MCF 10A (cell line): ENCODE measurements at regions of chr6 and their contacts with region 1.

Region 1: DNA sequence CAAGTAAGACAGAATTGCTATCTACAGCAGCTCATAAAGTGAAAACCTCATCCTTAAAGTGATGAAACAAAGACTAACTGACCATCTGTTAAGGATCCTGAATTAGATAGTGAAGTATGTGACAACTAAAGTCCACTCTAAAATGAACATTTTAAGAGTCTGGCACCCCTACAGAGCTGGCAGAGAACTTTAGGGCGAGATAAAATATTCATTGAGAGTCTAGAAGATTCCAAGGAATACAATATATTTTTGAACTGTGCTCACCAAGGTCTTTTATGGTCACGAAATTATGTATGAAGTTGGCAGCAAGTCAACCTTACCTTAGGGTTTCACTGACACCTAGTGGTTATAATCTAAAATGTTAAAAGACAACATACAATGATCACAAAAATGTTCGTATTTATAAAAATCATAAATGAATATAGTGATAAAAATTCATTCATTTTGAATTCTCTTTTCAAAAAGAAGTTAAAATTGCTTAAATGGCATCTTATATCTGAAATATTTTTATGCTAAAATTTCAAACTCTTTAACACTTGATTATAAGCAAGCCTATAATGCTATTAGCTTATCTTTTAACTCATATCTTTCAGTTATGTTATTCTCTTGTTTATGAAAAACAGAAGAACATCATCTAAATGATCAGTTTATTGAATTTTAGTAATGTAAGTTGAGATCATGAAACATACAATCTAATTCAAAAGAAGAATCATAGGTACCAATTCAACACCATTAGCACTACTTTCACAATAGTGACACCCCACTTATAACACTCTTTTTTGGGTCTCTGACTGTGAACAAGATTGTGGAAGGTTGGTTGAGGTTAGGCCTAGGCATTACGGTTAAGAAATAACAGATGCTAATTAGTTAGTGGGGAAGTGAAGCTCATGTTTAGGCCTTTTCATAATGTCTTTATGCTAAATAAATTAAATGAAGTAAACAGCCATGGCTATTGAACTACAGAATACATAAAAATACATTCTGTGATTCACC is 27.5 kb downstream of the RSPH3 start:
- DNase-seq: peak; percentile 63
- H3K4me3 Mint-ChIP-seq: no peak overlapping the region
- H3K27ac Mint-ChIP-seq: no peak overlapping the region
- H3K4me1 Mint-ChIP-seq: peaks cover 5% of the 10 kb centered on the region
- H3K27me3 Mint-ChIP-seq: no peaks in the 10 kb centered on the region
- CTCF ChIP-seq: peak; percentile 57

Region 2: DNA sequence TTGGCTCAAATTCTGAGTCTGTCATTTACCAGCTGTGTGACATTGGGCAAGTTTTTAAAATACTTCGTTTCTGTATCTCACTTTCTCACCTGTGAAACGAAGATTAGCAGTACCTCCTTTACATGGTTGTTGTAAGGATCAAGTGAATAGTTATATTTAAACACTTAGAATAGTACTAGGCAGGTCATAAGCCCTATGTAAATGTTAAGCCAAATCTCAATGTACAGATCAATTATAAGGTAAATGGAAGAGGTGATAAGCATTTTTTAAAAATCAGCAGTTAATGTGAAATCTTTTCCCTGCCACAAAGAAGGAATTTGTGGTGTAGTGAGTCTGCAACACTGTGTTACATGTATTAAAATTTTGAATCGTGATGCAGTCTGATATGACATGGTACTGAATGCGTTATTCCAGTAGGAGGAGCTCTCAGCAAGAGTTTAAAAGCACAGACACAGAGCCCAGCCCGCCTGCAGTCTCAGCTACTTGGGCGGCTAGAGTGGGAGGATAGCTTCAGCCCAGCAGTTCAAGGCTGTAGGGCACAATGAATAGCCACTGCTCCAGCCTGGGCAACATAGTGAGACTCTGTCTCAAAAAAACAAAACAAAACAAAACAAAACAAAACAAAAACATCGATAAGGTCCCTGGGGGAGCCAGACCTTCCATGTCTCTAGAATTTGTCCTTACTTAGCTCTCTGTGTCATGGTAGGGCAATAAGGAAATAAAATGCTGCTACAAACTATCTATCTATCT is 758.4 kb before region 1 on chr6:
- CTCF ChIA-PET with region 1: interaction called, 4 read pairs
- POLR2A ChIA-PET with region 1: no interaction called
- intact Hi-C with region 1: loop called (anchors 5 kb)
- DNase-seq: peak; percentile 80
- H3K4me3 Mint-ChIP-seq: no peak overlapping the region
- H3K27ac Mint-ChIP-seq: no peak overlapping the region
- H3K4me1 Mint-ChIP-seq: peaks cover 10% of the 10 kb centered on the region
- H3K27me3 Mint-ChIP-seq: no peaks in the 10 kb centered on the region
- CTCF ChIP-seq: peak; percentile 75

Region 3: GRCh38 chr6:158772851-158773371 is 199.6 kb before region 1 on chr6:
- CTCF ChIA-PET with region 1: interaction called, 4 read pairs
- POLR2A ChIA-PET with region 1: no interaction called
- intact Hi-C with region 1: loop called (anchors 2 kb)
- DNase-seq: peak; percentile 61
- H3K4me3 Mint-ChIP-seq: no peak overlapping the region
- H3K27ac Mint-ChIP-seq: peak overlapping the region; percentile 64
- H3K4me1 Mint-ChIP-seq: peaks cover 23% of the 10 kb centered on the region
- H3K27me3 Mint-ChIP-seq: no peaks in the 10 kb centered on the region
- CTCF ChIP-seq: no peak

Region 4: DNA sequence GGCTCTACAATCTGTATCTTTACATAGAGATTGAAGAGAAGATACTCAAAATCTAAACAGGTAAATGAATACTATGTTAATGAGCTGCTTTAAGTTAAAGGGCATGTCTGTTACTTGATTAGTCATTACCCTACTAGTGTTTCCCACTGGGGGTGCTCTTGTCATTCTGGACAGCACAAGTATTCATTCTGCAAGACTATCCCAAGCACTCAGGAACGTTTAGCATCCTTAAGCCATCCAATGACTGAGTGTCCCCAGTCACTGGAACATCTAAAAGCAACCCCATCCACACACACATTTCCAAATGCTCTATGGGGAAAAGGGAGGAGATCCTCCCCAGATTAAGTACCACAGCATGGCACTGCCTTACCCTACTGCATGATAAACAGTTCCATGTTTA is 179.1 kb before region 1 on chr6:
- CTCF ChIA-PET with region 1: interaction called, 38 read pairs
- POLR2A ChIA-PET with region 1: interaction called, 3 read pairs
- intact Hi-C with region 1: loop called (anchors 1 kb)
- DNase-seq: peak; percentile 71
- H3K4me3 Mint-ChIP-seq: no peak overlapping the region
- H3K27ac Mint-ChIP-seq: no peak overlapping the region
- H3K4me1 Mint-ChIP-seq: peaks cover 15% of the 10 kb centered on the region
- H3K27me3 Mint-ChIP-seq: no peaks in the 10 kb centered on the region
- CTCF ChIP-seq: peak; percentile 22

Region 5: DNA sequence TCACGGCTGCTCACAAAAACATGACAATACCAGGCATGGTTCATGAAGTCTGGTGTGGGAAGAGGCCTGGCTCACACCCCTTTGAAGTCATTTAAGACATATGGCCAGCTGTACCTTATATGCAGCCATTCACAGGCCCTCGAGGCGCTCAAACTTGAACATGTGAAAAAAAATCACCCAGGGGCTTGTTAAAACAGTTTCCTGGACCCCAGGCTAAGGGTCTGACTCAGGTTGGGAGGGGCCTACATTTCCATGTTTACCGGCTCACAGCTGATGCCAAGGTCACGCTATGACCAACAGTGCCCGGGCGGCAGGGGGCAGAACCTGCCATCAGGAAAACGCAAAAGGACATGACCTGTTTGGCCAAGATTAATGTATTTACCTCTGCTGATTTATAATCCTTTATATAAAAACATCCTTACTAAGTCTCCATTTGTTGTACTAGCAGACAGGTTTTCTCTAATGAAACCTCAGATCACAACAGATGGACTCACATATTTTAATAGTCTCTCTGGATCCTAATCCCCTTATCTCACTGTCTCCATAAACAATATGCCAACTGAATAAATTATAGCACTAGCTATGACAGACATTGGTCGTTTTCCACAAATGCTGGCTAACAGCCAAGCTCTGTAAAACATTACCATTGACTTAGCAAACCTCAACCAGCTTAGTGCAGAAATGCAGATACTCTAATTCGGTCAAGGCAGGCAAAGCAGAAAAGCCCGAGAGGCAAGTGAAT is 173.3 kb before region 1 on chr6:
- CTCF ChIA-PET with region 1: interaction called, 38 read pairs
- POLR2A ChIA-PET with region 1: interaction called, 3 read pairs
- intact Hi-C with region 1: no loop called
- DNase-seq: peak; percentile 36
- H3K4me3 Mint-ChIP-seq: no peak overlapping the region
- H3K27ac Mint-ChIP-seq: peak overlapping the region; percentile 75
- H3K4me1 Mint-ChIP-seq: peaks cover 37% of the 10 kb centered on the region
- H3K27me3 Mint-ChIP-seq: no peaks in the 10 kb centered on the region
- CTCF ChIP-seq: peak; percentile 9

Region 6: GRCh38 chr6:158819213-158819909 is 153.2 kb before region 1 on chr6 and contains the start of gene EZR:
- CTCF ChIA-PET with region 1: interaction called, 5 read pairs
- POLR2A ChIA-PET with region 1: interaction called, 15 read pairs
- intact Hi-C with region 1: loop called (anchors 1 kb)
- DNase-seq: peak; percentile 76
- H3K4me3 Mint-ChIP-seq: peak within 1 kb of the TSS; percentile 97
- H3K27ac Mint-ChIP-seq: peak within 1 kb of the TSS; percentile 97
- H3K4me1 Mint-ChIP-seq: peaks cover 17% of the 10 kb centered on the region
- H3K27me3 Mint-ChIP-seq: no peaks in the 10 kb centered on the region
- CTCF ChIP-seq: no peak
- total RNA-seq, gene EZR: 243 and 296 TPM in 2 replicates

Region 7: DNA sequence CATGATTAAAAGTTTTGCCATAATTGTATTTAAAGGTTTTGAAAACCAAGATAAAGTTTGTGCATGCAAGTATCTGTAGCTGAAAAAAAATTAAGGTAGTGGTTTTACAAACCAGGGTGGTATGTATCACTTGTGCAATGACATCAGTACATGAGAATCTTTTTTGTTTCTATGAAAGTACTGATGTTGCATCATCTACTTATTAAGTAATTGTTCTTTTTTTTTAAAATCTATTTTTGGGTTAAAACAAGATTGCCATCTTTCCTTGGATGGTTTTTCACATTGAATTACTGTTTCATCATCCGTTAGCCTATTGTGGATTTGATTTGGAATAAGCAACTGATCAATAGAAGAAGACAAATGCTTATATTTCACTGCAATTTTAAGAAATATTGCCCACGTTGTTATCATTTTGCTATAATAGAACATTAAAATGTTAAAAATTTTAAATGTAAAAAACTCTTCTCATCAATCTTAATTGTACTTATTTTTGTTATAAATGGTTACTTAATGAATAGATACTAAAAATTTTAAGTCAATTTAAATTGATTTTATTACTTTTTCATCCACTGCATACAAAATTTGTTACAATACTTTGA is 112.1 kb after region 1 on chr6:
- CTCF ChIA-PET with region 1: no interaction called
- POLR2A ChIA-PET with region 1: no interaction called
- intact Hi-C with region 1: no loop called
- DNase-seq: peak; percentile 58
- H3K4me3 Mint-ChIP-seq: no peak overlapping the region
- H3K27ac Mint-ChIP-seq: no peak overlapping the region
- H3K4me1 Mint-ChIP-seq: no peaks in the 10 kb centered on the region
- H3K27me3 Mint-ChIP-seq: no peaks in the 10 kb centered on the region
- CTCF ChIP-seq: no peak

Region 8: DNA sequence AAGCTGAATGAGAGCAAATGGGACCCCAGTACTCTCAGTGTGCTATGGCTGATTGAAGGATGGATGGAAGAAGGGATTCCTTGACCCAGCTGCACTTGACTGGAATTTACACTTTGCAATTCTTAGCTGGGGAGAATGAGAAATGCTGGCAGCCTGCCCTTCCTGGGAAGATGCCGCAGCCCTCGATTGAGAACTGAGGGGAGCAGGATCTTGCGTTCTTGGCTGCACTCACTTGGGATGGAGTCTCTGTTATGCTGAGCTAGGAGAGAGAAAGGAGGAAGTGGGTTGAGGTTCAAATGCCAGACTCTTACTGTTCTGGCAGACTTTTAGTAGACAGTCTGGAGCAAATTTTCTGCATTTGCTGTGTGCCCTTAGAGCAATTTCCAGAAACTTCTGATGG is 417.8 kb after region 1 on chr6:
- CTCF ChIA-PET with region 1: no interaction called
- POLR2A ChIA-PET with region 1: no interaction called
- intact Hi-C with region 1: no loop called
- DNase-seq: no peak
- H3K4me3 Mint-ChIP-seq: no peak overlapping the region
- H3K27ac Mint-ChIP-seq: no peak overlapping the region
- H3K4me1 Mint-ChIP-seq: no peaks in the 10 kb centered on the region
- H3K27me3 Mint-ChIP-seq: peaks cover 45% of the 10 kb centered on the region
- CTCF ChIP-seq: no peak